Right ventricle myocardium inferior (tissue), 1 donor: ENCODE measurements at regions of chr18 and their contacts with region 1.

Region 1: GRCh38 chr18:48663931-48664847 is 125.4 kb downstream of the CTIF start:
- DNase-seq: peak; percentile 87
- ATAC-seq: peak; percentile 63

Region 2: DNA sequence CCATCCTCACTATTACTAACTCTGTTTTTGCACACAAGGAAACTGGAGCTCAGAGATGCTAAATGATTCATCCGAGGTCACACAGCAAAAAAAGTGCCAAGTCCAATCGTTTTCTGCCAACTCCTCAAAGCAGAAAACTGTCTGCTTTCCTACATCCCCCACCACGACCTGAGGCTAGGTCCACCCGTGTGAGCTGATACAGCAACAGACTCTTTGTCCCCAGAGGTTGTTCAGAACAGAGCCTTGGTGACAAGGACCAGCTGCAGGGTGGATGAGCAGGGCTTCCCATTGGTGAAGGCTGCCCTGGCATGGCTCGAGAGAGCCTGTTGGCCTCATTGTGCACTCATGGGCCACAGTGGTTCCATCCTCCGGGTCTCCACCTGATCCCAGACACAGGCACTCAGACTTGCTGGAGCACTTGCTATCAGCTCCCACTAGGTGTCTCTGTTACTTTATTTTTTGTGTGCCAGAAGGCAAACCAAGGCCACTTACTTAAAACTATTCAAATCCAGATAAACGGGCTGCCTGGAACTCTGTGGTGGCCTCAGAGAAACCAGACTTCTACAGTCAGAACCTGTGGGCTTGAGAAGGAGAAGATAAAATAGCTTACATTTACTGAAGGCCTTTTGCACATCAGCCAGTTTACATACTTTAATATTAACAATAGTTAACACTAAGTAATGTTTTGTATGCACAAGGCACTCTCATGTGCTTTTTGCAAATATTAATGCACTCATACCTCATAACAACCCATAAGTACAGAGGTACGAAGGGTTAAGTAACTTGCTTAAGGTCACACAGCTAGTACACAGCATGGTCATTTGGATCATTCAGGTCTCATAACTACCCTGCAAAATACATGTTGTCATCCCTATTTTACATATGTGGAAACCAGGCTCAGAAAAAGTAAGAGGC is 188.3 kb before region 1 on chr18:
- intact Hi-C with region 1: loop called (anchors 1 kb)
- DNase-seq: no peak
- ATAC-seq: peak; percentile 72

Region 3: DNA sequence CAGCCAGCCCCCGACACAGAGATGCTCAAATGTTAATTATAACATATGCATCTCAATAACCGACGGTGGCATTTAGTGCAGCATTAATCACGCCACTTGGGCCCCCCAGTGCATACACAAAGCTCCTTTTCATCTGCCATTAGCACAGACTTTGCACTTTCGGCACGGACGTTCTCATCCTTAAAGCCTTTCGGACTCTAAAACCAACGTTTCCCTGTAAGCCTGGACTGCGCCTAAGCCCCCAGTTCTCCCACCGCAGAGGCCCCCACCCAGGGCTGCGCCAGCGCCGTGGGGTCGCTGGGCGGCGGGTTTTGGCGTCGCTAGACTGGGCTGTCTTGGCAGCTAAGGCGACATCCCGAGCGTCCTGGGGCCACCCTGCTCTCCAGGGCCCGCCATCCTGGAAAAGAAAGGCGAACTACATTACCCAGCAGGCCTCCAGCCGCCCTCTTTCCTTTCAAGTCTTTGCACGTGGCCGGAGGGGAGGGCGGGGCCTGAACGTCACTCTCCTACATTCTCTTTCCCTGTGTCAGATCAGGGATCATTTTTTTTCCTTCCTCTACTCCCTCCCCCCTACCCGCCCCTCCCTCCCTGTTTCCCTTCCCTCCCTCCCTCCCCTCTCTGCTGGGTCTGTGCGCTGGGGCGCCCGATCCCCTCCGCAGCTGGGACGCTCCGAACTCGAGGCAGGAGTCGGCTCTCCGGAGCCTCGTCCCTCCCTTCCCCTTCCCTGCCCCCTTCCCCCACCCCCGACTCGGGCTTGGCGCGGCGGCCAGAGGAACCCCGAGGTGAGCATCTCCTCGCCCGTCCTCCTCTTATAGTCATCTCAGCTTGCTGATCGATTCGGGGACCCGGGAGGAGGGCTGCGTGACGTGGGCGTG is 125.4 kb before region 1 on chr18 and contains the start of gene CTIF:
- intact Hi-C with region 1: loop called (anchors 2 kb)
- DNase-seq: peak; percentile 97
- ATAC-seq: peak; percentile 91
- total RNA-seq, gene CTIF: 74.0 TPM